ENCODE measurements at regions of chr3 and their contacts with region 1.

Region 1: DNA sequence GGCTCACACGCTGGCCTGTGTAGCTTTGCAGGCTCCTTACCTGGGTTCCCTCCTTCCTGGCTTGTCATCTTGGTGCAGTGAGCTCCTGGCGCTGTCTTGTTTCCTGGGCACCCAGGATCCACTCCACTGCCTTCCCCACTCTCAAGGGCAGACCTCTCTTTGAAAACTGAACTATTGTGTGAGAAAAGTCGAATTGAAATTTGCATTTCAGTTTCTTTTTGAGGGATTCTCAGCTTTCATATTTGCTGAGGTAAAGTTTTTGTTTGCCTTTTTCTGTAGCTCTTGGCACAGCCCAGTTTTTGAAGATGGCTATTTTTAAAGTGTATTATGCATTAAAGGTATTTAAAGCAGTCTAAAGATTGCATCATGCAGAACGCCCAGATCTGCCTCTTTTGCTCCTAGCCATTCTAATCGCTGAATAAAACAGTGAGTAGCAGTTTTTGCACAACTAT is 70.1 kb downstream of the CCK start:
- DNase-seq: peak; percentile 73
- H3K4me3 ChIP-seq: peak overlapping the region; percentile 53
- H3K27ac ChIP-seq: peak overlapping the region; percentile 92
- H3K4me1 ChIP-seq: peaks cover 73% of the 10 kb centered on the region
- CTCF ChIP-seq: no peak

Region 2: GRCh38 chr3:42025370-42026138 is 170.4 kb before region 1 on chr3:
- CTCF ChIA-PET with region 1: no interaction called
- POLR2A ChIA-PET with region 1: no interaction called
- intact Hi-C with region 1: no loop called
- DNase-seq: peak; percentile 55
- H3K4me3 ChIP-seq: peak overlapping the region; percentile 47
- H3K27ac ChIP-seq: peak overlapping the region; percentile 40
- H3K4me1 ChIP-seq: peaks cover 59% of the 10 kb centered on the region
- CTCF ChIP-seq: no peak

Region 3: DNA sequence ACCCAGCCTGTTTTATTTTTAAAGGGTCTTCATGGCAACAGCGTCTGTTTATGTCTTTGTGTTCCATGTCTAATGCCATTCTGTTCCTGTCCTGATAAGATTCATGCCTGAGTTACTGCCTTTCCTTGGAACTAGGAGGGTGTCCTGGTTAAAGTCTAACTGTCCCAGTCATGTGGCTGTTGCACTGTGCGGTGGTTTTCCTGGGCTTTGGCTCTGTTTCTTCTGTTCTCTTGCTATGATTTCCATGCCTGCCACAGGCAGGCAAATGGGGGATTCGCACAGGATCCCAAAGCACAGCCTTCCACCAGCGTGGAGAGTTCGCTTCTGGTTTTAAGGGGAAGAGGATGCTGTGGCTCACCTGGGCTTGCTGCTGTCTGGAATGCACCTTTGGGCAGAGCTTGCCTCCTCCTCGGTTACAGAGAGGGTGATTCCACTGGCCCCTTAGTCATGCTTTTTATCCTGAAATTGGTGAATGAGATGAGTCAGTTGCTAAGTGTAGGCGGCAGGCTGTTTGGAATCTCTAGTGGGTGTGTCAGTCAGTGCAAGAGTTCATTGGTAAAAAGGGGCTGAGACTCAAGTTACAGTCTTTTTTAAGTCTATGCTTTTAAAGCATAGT is 16.7 kb before region 1 on chr3:
- CTCF ChIA-PET with region 1: interaction called, 9 read pairs
- POLR2A ChIA-PET with region 1: interaction called, 14 read pairs
- intact Hi-C with region 1: loop called (anchors 1 kb)
- DNase-seq: no peak
- H3K4me3 ChIP-seq: no peak overlapping the region
- H3K27ac ChIP-seq: peak overlapping the region; percentile 10
- H3K4me1 ChIP-seq: peaks cover 68% of the 10 kb centered on the region
- CTCF ChIP-seq: no peak

Region 4: DNA sequence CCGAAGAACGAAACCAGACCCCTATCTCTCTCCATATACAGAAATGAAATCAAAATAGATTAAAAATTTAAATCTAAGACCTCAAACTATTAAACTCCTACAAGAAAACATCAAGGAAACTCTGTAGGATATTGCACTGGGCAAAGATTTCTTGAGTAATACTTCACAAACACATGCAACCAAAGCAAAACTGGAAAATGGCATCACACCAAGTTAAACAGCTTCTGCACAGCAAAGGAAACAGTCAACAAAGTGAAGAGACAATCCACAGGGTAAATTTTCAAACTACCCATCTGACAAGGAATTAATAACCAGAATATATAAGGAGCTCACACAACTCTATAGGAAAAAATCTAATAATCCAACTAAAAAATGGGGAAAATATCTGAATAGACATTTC is 40.7 kb after region 1 on chr3:
- CTCF ChIA-PET with region 1: no interaction called
- POLR2A ChIA-PET with region 1: no interaction called
- intact Hi-C with region 1: no loop called
- DNase-seq: no peak
- H3K4me3 ChIP-seq: no peak overlapping the region
- H3K27ac ChIP-seq: no peak overlapping the region
- H3K4me1 ChIP-seq: no peaks in the 10 kb centered on the region
- CTCF ChIP-seq: no peak

Measured in OCI-LY7 (cell line).